Panc1 (cell line): ENCODE measurements at regions of chr6 and their contacts with region 1.

Region 1: GRCh38 chr6:1297746-1298145 is 14.2 kb upstream of the FOXQ1 start:
- DNase-seq: no peak
- ATAC-seq: no peak
- H3K4me3 ChIP-seq: no peak overlapping the region
- H3K27ac ChIP-seq: no peak overlapping the region
- H3K4me1 ChIP-seq: no peaks in the 10 kb centered on the region
- H3K27me3 ChIP-seq: no peaks in the 10 kb centered on the region
- CTCF ChIP-seq: no peak

Region 2: GRCh38 chr6:446418-447366 is 851.1 kb before region 1 on chr6:
- CTCF ChIA-PET with region 1: no interaction called
- POLR2A ChIA-PET with region 1: no interaction called
- in situ Hi-C with region 1: no loop called
- intact Hi-C with region 1: no loop called
- DNase-seq: no peak
- ATAC-seq: no peak
- H3K4me3 ChIP-seq: no peak overlapping the region
- H3K27ac ChIP-seq: no peak overlapping the region
- H3K4me1 ChIP-seq: no peaks in the 10 kb centered on the region
- H3K27me3 ChIP-seq: no peaks in the 10 kb centered on the region
- CTCF ChIP-seq: no peak

Region 3: GRCh38 chr6:1170794-1171193 is 127.0 kb before region 1 on chr6:
- CTCF ChIA-PET with region 1: no interaction called
- POLR2A ChIA-PET with region 1: interaction called, 12 read pairs
- in situ Hi-C with region 1: no loop called
- intact Hi-C with region 1: no loop called
- DNase-seq: no peak
- ATAC-seq: no peak
- H3K4me3 ChIP-seq: no peak overlapping the region
- H3K27ac ChIP-seq: no peak overlapping the region
- H3K4me1 ChIP-seq: no peaks in the 10 kb centered on the region
- H3K27me3 ChIP-seq: no peaks in the 10 kb centered on the region
- CTCF ChIP-seq: no peak

Region 4: DNA sequence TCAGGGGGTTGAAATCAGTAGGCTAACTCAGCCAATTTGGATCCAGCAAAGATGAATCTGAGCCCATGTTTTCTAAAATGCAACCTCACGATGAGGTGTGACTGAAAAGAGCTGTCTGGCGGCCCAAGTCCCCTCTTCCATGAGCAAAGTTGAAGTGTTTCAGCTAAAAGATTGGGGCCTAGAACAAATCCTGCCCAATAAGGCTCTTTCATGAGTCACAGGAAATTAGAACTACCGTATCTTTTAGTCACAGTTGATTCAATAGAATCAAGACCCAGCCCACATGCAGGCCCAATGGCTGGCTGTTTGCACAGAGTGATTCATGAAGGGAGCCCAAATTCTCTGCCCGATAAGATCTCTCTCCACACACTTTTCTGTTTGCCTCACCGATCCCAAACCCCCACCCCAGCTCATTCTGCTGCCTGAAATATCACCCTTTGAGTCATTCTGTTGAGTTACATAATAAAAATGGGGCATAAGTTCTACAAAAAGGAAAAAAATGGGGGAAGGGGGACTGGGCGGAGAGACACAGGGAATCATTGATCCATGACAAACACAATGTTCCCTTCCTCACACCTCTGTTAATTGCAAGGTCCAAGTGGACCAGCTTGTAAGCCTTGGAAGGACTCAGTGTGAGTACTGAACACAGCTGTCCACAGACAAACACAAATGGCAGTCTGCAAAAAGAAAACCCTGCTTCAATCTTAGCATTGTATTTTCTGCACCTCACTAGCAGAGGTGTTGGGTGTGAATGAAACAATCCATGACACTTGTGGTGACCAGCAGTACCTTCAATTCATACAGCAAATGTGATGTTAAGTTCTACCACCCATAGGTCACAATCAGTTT is 27.9 kb after region 1 on chr6:
- CTCF ChIA-PET with region 1: interaction called, 12 read pairs
- POLR2A ChIA-PET with region 1: no interaction called
- in situ Hi-C with region 1: no loop called
- intact Hi-C with region 1: no loop called
- DNase-seq: peak; percentile 91
- ATAC-seq: peak; percentile 93
- H3K4me3 ChIP-seq: no peak overlapping the region
- H3K27ac ChIP-seq: peak overlapping the region; percentile 92
- H3K4me1 ChIP-seq: peaks cover 54% of the 10 kb centered on the region
- H3K27me3 ChIP-seq: no peaks in the 10 kb centered on the region
- CTCF ChIP-seq: no peak